PC-3 (cell line): ENCODE measurements at regions of chr6 and their contacts with region 1.

Region 1: DNA sequence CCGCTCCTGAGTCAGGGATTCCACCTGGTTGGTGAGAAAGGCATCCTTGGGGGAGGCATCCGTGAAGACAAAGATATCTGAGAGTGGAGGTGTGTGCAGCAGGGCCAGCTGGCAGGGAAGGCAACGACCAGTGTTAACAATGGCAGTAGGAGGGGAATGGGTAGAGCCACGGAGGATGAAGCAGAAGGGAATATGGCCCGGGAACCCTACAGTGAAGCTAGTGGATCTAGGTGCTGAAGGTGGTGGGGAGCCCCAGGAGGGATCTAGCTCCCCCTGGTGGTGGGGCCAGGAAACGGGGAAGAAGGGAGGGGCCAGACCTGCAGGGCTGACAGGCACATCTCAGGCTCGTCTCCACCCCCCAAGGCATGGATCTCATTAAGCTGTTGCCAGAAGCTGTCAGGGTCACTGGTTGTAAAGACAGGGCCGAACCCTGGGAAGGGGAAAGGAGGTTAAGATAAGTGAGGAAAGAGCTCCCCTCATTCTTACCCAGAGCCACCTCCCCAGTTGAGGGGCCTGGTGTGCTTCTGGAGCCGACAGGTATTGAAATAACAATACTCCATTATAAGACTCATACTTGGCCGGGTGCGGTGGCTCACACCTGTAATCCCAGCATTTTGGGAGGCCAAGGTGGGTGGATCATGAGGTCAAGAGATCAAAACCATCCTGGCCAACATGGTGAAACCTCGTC is 7.3 kb downstream of the VWA7 start:
- DNase-seq: peak; percentile 85
- ATAC-seq: peak; percentile 64
- H3K4me3 ChIP-seq: no peak overlapping the region
- H3K27ac ChIP-seq: no peak overlapping the region
- H3K4me1 ChIP-seq: no peaks in the 10 kb centered on the region
- H3K27me3 ChIP-seq: no peaks in the 10 kb centered on the region
- CTCF ChIP-seq: peak; percentile 92

Region 2: GRCh38 chr6:31609519-31610406 is 160.1 kb before region 1 on chr6:
- CTCF ChIA-PET with region 1: no interaction called
- POLR2A ChIA-PET with region 1: no interaction called
- intact Hi-C with region 1: no loop called
- DNase-seq: no peak
- ATAC-seq: no peak
- H3K4me3 ChIP-seq: no peak overlapping the region
- H3K27ac ChIP-seq: no peak overlapping the region
- H3K4me1 ChIP-seq: no peaks in the 10 kb centered on the region
- H3K27me3 ChIP-seq: no peaks in the 10 kb centered on the region
- CTCF ChIP-seq: no peak

Region 3: DNA sequence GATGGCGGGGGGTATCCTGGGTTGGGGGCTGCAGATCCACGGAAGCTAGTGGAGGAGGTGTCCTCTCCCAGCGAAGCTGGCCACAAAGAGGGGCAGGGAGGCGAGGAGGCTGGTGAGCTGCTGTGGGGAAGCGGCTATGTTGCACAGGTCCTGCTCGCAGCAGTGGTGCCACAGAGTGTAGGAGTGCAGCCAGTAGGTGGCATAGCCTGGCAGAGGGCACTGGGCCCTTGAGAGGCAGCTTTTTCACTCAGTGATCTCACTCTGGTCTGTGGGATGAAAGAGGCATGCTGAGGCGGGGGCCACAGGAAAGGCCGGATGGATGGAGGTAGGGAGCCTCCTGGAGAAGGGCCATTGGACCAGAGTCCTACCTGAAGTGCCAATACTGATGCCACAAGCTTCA is 57.5 kb before region 1 on chr6:
- CTCF ChIA-PET with region 1: no interaction called
- POLR2A ChIA-PET with region 1: no interaction called
- intact Hi-C with region 1: loop called (anchors 10 kb)
- DNase-seq: peak; percentile 61
- ATAC-seq: peak; percentile 97
- H3K4me3 ChIP-seq: no peak overlapping the region
- H3K27ac ChIP-seq: no peak overlapping the region
- H3K4me1 ChIP-seq: peaks cover 2% of the 10 kb centered on the region
- H3K27me3 ChIP-seq: no peaks in the 10 kb centered on the region
- CTCF ChIP-seq: peak; percentile 66

Region 4: DNA sequence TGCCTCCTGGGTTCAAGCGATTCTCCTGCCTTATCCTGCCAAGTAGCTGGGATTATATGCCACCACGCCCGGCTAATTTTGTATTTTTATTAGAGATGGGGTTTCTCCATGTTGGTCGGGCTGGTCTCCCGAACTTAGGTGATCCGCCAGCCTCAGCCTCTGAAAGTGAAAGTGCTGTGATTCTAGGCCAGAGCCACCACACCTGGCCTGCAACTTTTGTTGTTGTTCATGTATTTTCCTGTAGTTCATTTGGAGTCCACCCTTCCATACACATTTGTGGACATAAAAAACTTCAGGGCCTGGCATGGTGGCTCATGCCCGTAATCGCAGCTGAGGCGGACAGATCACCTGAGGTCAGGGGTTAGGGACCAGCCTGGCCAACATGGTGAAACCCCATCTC is 72.2 kb after region 1 on chr6:
- CTCF ChIA-PET with region 1: no interaction called
- POLR2A ChIA-PET with region 1: no interaction called
- intact Hi-C with region 1: no loop called
- DNase-seq: no peak
- ATAC-seq: 0 out of 2 replicates have a peak, but pooled peaks have one; percentile 5
- H3K4me3 ChIP-seq: no peak overlapping the region
- H3K27ac ChIP-seq: no peak overlapping the region
- H3K4me1 ChIP-seq: peaks cover 15% of the 10 kb centered on the region
- H3K27me3 ChIP-seq: no peaks in the 10 kb centered on the region
- CTCF ChIP-seq: no peak